ENCODE measurements at regions of chr7 and their contacts with region 1.

Region 1: GRCh38 chr7:81769891-81770727 is at the start of gene HGF:
- DNase-seq: peak; percentile 70
- H3K4me3 ChIP-seq: peak within 1 kb of the TSS; percentile 76
- H3K27ac ChIP-seq: peak within 1 kb of the TSS; percentile 54
- H3K27me3 ChIP-seq: no peaks in the 10 kb centered on the region
- CTCF ChIP-seq: peak; percentile 50
- polyA plus RNA-seq, gene HGF: 105 and 129 TPM in 2 replicates

Region 2: DNA sequence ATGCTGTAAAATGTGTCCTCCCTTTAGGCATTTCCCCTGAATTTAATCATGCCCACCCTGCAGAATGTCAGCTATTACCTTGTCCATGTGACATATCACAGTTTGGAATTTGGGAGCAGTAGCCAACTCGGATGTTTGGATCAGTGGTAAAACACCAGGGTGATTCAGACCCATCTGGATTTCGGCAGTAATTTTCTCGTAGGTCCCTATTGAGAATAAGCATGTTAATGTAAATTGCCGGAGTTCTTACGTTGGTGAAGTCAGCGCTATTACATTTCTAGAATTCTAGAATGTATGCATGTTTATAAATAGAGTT is 44.3 kb before region 1 on chr7:
- CTCF ChIA-PET with region 1: interaction called, 5 read pairs
- POLR2A ChIA-PET with region 1: interaction called, 14 read pairs
- DNase-seq: peak; percentile 98
- H3K4me3 ChIP-seq: no peak overlapping the region
- H3K27ac ChIP-seq: peak overlapping the region; percentile 83
- H3K27me3 ChIP-seq: no peaks in the 10 kb centered on the region
- CTCF ChIP-seq: no peak

Region 3: DNA sequence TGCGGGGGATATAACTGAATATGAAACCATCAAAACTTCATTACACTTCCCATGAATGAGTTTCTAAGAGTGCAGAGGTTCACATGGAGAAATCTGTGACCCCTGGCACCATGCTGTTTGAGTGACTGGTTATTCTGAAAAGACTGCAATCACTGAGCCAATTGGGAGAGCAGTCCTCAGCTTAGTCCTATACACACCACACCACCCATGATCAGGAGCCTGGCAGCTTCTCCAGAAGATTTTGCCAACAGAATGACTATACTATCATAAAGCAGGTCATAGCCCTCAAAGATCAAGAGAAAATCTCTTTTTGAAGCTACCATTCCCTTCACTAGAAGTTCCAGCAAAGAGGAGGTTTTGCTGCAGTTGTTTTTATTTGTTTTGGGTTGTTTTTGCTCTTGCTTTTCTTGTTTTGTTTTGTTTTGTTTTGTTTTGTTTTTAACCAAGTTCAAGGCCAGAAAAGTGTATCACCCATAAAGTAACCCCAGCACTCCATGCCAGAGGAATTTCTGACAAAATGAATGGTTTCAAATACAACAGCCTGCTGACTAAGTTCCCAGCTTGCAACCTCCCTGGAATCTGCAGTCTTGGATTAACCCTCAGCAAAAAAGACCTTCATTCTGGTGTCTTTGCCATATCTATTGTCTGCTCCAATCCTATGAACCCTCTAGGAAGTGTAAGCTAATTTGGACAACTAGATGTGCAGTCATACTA is 19.5 kb after region 1 on chr7:
- CTCF ChIA-PET with region 1: interaction called, 15 read pairs
- POLR2A ChIA-PET with region 1: no interaction called
- DNase-seq: no peak
- H3K4me3 ChIP-seq: no peak overlapping the region
- H3K27ac ChIP-seq: no peak overlapping the region
- H3K27me3 ChIP-seq: no peaks in the 10 kb centered on the region
- CTCF ChIP-seq: no peak

Region 4: GRCh38 chr7:82017334-82017943 is 247.3 kb after region 1 on chr7:
- CTCF ChIA-PET with region 1: interaction called, 13 read pairs
- POLR2A ChIA-PET with region 1: no interaction called
- DNase-seq: peak; percentile 13
- H3K4me3 ChIP-seq: no peak overlapping the region
- H3K27ac ChIP-seq: no peak overlapping the region
- H3K27me3 ChIP-seq: no peaks in the 10 kb centered on the region
- CTCF ChIP-seq: peak; percentile 65